CD8-positive, alpha-beta T cell (primary cell): ENCODE measurements at regions of chr10 and their contacts with region 1.

Region 1: DNA sequence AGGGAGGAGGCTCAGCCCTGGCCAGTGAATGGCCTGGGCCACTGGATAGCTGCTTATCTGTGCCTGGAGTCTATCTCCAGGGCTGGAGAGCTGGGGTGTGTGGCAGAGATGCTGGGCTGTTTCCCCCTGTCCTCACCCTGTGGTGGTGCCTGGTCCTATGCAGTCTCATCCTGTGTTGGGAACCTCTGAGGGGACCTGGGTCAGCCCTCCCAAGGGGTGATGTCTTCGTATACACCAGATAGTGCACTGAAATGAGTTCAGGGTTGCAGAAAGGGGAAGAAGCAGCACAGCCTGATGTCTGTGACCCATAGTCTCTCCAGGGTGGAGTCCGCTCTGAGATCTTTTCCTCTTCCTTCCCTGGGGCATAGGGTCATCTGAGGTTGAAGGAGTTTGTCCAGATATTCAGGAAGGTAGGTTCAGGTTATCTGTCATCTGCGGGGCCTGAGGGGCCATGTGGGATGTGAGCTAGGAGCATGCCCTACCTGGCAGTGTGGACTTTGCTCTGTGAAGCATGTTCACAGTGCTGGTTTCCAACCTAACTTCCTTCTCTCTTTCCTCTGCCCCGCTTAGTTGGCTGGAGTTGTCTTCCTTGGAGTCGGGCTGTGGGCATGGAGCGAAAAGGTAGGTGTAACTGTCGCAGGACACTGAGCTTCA is 33.4 kb upstream of the SH2D4B start:
- DNase-seq: no peak
- ATAC-seq: no peak
- H3K4me3 ChIP-seq: no peak overlapping the region
- H3K4me3 Mint-ChIP-seq: peak overlapping the region; percentile 30
- H3K27ac ChIP-seq: peak overlapping the region in 1 of 2 experiments; percentile 71
- H3K27ac Mint-ChIP-seq: peak overlapping the region; percentile 94
- H3K4me1 ChIP-seq: peaks cover 69% of the 10 kb centered on the region
- H3K4me1 Mint-ChIP-seq: peaks cover 71% of the 10 kb centered on the region
- H3K27me3 ChIP-seq: no peaks in the 10 kb centered on the region
- H3K27me3 Mint-ChIP-seq: no peaks in the 10 kb centered on the region
- CTCF ChIP-seq: no peak

Region 2: GRCh38 chr10:80408242-80409101 is 95.8 kb before region 1 on chr10 and contains the start of gene PRXL2A:
- CTCF ChIA-PET with region 1: interaction called, 14 read pairs
- POLR2A ChIA-PET with region 1: interaction called, 7 read pairs
- intact Hi-C with region 1: no loop called
- DNase-seq: peak; percentile 52 to 87 (median 82)
- ATAC-seq: peak; percentile 96
- H3K4me3 ChIP-seq: peak within 1 kb of the TSS; percentile 65 to 70
- H3K4me3 Mint-ChIP-seq: peak within 1 kb of the TSS; percentile 91
- H3K27ac ChIP-seq: peak within 1 kb of the TSS in 1 of 2 experiments; percentile 39
- H3K27ac Mint-ChIP-seq: peak within 1 kb of the TSS; percentile 77
- H3K4me1 ChIP-seq: peaks cover 4% of the 10 kb centered on the region
- H3K4me1 Mint-ChIP-seq: peaks cover 32% of the 10 kb centered on the region
- H3K27me3 ChIP-seq: peaks cover 0 to 3% of the 10 kb centered on the region in 2 experiments
- H3K27me3 Mint-ChIP-seq: no peaks in the 10 kb centered on the region
- CTCF ChIP-seq: no peak
- total RNA-seq, gene PRXL2A: 4.6 to 5.1 TPM

Region 3: DNA sequence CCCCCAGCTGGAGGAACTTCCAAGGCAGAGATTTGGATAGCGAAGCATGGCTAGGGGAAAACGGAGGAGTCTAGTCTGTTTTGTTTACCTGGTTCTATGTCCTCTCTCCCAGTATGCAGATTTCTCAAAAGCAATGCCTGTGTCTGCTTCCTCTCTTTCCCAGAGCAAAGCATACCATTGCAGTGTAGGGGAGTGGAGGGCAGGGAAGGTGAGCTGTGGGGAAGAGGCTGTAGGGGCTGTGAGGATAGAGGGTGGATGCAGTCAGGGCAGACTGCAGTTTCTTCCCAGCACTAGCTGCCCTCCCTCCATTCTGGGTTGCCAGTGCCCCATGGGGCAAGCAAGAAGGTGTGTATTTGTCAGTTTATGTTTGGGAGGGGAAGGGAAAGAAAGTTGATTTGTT is 67.1 kb before region 1 on chr10:
- CTCF ChIA-PET with region 1: interaction called, 562 read pairs
- POLR2A ChIA-PET with region 1: no interaction called
- intact Hi-C with region 1: no loop called
- DNase-seq: no peak
- ATAC-seq: no peak
- H3K4me3 ChIP-seq: no peak overlapping the region
- H3K4me3 Mint-ChIP-seq: no peak overlapping the region
- H3K27ac ChIP-seq: no peak overlapping the region
- H3K27ac Mint-ChIP-seq: no peak overlapping the region
- H3K4me1 ChIP-seq: no peaks in the 10 kb centered on the region
- H3K4me1 Mint-ChIP-seq: no peaks in the 10 kb centered on the region
- H3K27me3 ChIP-seq: no peaks in the 10 kb centered on the region
- H3K27me3 Mint-ChIP-seq: no peaks in the 10 kb centered on the region
- CTCF ChIP-seq: no peak

Region 4: GRCh38 chr10:80459047-80459931 is 45.0 kb before region 1 on chr10:
- CTCF ChIA-PET with region 1: interaction called, 404 read pairs
- POLR2A ChIA-PET with region 1: interaction called, 80 read pairs
- intact Hi-C with region 1: loop called in 1 of 2 experiments (anchors 2 kb)
- DNase-seq: peak in 8 of 9 experiments; percentile 54 to 87 (median 75)
- ATAC-seq: peak; percentile 57
- H3K4me3 ChIP-seq: peak overlapping the region; percentile 44 to 51
- H3K4me3 Mint-ChIP-seq: peak overlapping the region; percentile 99
- H3K27ac ChIP-seq: peak overlapping the region; percentile 39 to 71
- H3K27ac Mint-ChIP-seq: peak overlapping the region; percentile 98
- H3K4me1 ChIP-seq: peaks cover 85% of the 10 kb centered on the region
- H3K4me1 Mint-ChIP-seq: peaks cover 84% of the 10 kb centered on the region
- H3K27me3 ChIP-seq: no peaks in the 10 kb centered on the region
- H3K27me3 Mint-ChIP-seq: no peaks in the 10 kb centered on the region
- CTCF ChIP-seq: no peak

Region 5: DNA sequence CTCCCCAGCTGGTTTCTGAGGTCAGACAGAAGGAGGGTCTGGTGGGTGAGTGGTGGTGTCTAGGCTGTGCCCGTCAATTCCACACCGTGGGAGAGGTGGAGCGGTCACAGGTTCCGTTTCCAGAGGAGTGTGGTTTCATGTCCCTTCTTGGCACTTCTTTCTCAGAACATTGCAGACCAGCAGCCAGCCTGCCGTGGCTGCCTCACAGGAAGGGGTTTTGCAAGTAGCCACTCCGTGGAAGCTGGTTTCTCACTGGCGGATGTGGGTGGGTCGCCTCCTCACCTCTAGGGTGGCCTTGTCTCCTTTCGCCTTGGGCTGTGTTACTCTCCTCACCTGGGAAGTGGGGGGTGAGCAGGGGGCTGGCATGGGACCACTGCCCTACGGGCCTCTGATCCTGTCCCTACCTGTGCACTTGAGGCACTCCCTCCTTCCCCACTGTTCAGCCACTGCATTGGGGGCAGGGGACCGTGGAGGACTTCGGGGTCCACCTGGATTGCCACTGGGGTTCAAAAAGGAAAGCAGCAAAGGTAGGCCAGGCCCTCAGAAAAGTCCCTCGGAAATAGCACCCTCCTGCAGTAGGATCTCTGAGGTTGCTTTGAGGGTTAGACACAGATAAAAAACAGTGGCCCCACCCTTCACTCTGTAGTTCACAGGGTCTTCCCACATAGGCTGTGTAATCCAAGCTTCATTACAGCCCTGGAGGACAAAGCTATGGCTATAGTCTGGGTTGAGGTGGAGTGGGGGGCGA is 16.3 kb before region 1 on chr10:
- CTCF ChIA-PET with region 1: interaction called, 137 read pairs
- POLR2A ChIA-PET with region 1: interaction called, 107 read pairs
- intact Hi-C with region 1: loop called in 1 of 2 experiments (anchors 2 kb)
- DNase-seq: peak in 8 of 9 experiments; percentile 55 to 87 (median 74)
- ATAC-seq: peak; percentile 68
- H3K4me3 ChIP-seq: peak overlapping the region; percentile 15 to 29
- H3K4me3 Mint-ChIP-seq: peak overlapping the region; percentile 77
- H3K27ac ChIP-seq: peak overlapping the region; percentile 24 to 75
- H3K27ac Mint-ChIP-seq: peak overlapping the region; percentile 92
- H3K4me1 ChIP-seq: peaks cover 98% of the 10 kb centered on the region
- H3K4me1 Mint-ChIP-seq: peaks cover 96% of the 10 kb centered on the region
- H3K27me3 ChIP-seq: no peaks in the 10 kb centered on the region
- H3K27me3 Mint-ChIP-seq: no peaks in the 10 kb centered on the region
- CTCF ChIP-seq: no peak

Region 6: GRCh38 chr10:80535671-80536365 is 31.5 kb after region 1 on chr10:
- CTCF ChIA-PET with region 1: interaction called, 14 read pairs
- POLR2A ChIA-PET with region 1: no interaction called
- intact Hi-C with region 1: no loop called
- DNase-seq: peak; percentile 45 to 90 (median 75)
- ATAC-seq: peak; percentile 85
- H3K4me3 ChIP-seq: peak overlapping the region; percentile 62 to 72
- H3K4me3 Mint-ChIP-seq: peak overlapping the region; percentile 84
- H3K27ac ChIP-seq: peak overlapping the region; percentile 85 to 91
- H3K27ac Mint-ChIP-seq: peak overlapping the region; percentile 98
- H3K4me1 ChIP-seq: peaks cover 21% of the 10 kb centered on the region
- H3K4me1 Mint-ChIP-seq: peaks cover 36% of the 10 kb centered on the region
- H3K27me3 ChIP-seq: no peaks in the 10 kb centered on the region
- H3K27me3 Mint-ChIP-seq: no peaks in the 10 kb centered on the region
- CTCF ChIP-seq: peak; percentile 70